H1 (cell line): ENCODE measurements at regions of chr10 and their contacts with region 1.

Region 1: GRCh38 chr10:96491299-96491698 is 22.4 kb downstream of the TLL2 start:
- DNase-seq: no peak
- H3K4me3 ChIP-seq: no peak overlapping the region
- H3K27ac ChIP-seq: no peak overlapping the region
- H3K4me1 ChIP-seq: no peaks in the 10 kb centered on the region
- H3K27me3 ChIP-seq: no peaks in the 10 kb centered on the region
- CTCF ChIP-seq: peak; percentile 31 to 58 (median 56)
- EP300 ChIP-seq: no peak
- POLR2A ChIP-seq: no peak
- RAD21 ChIP-seq: peak; percentile 76 to 79

Region 2: GRCh38 chr10:96395931-96396877 is 95.1 kb before region 1 on chr10:
- CTCF ChIA-PET with region 1: interaction called, 20 read pairs
- POLR2A ChIA-PET with region 1: no interaction called
- DNase-seq: peak; percentile 56 to 79
- H3K4me3 ChIP-seq: peak overlapping the region; percentile 10 to 49 (median 22); a peak in 4 of 8 replicates
- H3K27ac ChIP-seq: no peak overlapping the region
- H3K4me1 ChIP-seq: peaks cover 0 to 6% (median 2%) of the 10 kb centered on the region in 4 experiments; a peak in 6 of 7 replicates
- H3K27me3 ChIP-seq: no peaks in the 10 kb centered on the region; a peak in 2 of 7 replicates
- CTCF ChIP-seq: peak; percentile 88 to 91 (median 89)
- EP300 ChIP-seq: no peak
- POLR2A ChIP-seq: no peak
- RAD21 ChIP-seq: peak; percentile 91 to 92

Region 3: DNA sequence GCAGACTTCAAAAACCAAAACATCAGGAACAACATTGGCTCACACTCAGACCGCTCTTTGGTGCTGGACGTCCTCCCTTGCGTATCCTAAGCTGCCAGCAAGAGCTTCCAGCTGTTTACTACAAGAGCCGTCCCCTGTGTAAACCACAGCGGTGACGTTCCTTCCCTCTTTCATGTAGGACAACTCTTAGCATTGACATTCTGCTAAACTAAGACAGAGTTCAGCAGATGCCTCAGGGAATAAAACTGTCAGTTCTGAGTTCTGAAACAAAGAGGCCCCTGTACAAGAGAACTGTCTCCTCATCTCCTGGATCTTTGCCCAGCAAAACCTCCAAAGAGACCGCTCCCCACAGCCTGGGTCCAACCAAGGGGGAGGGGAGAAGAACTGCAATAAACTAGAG is 74.7 kb before region 1 on chr10:
- CTCF ChIA-PET with region 1: interaction called, 31 read pairs
- POLR2A ChIA-PET with region 1: no interaction called
- DNase-seq: peak in 1 of 2 experiments; percentile 27
- H3K4me3 ChIP-seq: no peak overlapping the region
- H3K27ac ChIP-seq: no peak overlapping the region
- H3K4me1 ChIP-seq: no peaks in the 10 kb centered on the region
- H3K27me3 ChIP-seq: no peaks in the 10 kb centered on the region
- CTCF ChIP-seq: no peak
- EP300 ChIP-seq: no peak
- POLR2A ChIP-seq: no peak
- RAD21 ChIP-seq: no peak

Region 4: GRCh38 chr10:96456296-96456840 is 34.9 kb before region 1 on chr10:
- CTCF ChIA-PET with region 1: interaction called, 10 read pairs
- POLR2A ChIA-PET with region 1: no interaction called
- DNase-seq: no peak
- H3K4me3 ChIP-seq: no peak overlapping the region
- H3K27ac ChIP-seq: no peak overlapping the region
- H3K4me1 ChIP-seq: peaks cover 8 to 18% (median 11%) of the 10 kb centered on the region in 4 experiments
- H3K27me3 ChIP-seq: no peaks in the 10 kb centered on the region
- CTCF ChIP-seq: no peak
- EP300 ChIP-seq: no peak
- POLR2A ChIP-seq: no peak
- RAD21 ChIP-seq: no peak

Region 5: DNA sequence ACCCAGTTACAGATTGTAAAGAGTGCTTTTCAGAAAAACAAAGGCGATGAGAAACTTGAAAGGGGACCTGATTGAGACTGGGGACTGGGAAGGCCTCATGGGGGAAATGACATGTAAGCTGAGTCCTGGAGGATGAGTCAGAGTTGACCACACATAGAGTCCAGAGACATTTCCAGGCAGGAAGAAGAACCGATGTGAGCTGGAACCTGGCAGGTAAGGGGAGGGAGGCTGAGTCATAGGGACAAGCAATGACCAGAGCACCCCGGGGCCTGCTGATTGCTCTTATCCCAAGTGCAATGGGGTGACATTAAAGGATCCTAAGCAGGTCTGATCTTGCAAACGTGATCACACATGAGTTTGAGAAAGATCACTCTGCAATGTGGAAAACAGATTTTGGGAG is 10.7 kb after region 1 on chr10:
- CTCF ChIA-PET with region 1: interaction called, 276 read pairs
- POLR2A ChIA-PET with region 1: no interaction called
- DNase-seq: no peak
- H3K4me3 ChIP-seq: no peak overlapping the region
- H3K27ac ChIP-seq: no peak overlapping the region
- H3K4me1 ChIP-seq: 0 out of 7 replicates have a peak, but pooled peaks cover 0 to 3% (median 0%) of the 10 kb centered on the region in 4 experiments
- H3K27me3 ChIP-seq: no peaks in the 10 kb centered on the region; a peak in 1 of 7 replicates
- CTCF ChIP-seq: no peak
- EP300 ChIP-seq: no peak
- POLR2A ChIP-seq: no peak
- RAD21 ChIP-seq: no peak

Region 6: GRCh38 chr10:96556003-96556402 is 64.7 kb after region 1 on chr10:
- CTCF ChIA-PET with region 1: interaction called, 12 read pairs
- POLR2A ChIA-PET with region 1: no interaction called
- DNase-seq: no peak
- H3K4me3 ChIP-seq: no peak overlapping the region
- H3K27ac ChIP-seq: no peak overlapping the region
- H3K4me1 ChIP-seq: no peaks in the 10 kb centered on the region
- H3K27me3 ChIP-seq: no peaks in the 10 kb centered on the region
- CTCF ChIP-seq: peak in 2 of 3 experiments; percentile 44 to 45; a peak in 3 of 4 replicates
- EP300 ChIP-seq: no peak
- POLR2A ChIP-seq: no peak
- RAD21 ChIP-seq: peak; percentile 55 to 65